ENCODE measurements at regions of chr2 and their contacts with region 1.

Region 1: GRCh38 chr2:85132834-85133637 is at the start of gene TCF7L1:
- DNase-seq: peak in 1 of 2 donors; percentile 93
- H3K4me3 ChIP-seq: peak within 1 kb of the TSS; percentile 87 to 95
- H3K27ac ChIP-seq: peak within 1 kb of the TSS; percentile 91
- H3K4me1 ChIP-seq: peaks cover 51% of the 10 kb centered on the region
- H3K27me3 ChIP-seq: no peaks in the 10 kb centered on the region
- CTCF ChIP-seq: peak; percentile 72 to 80 (median 75)
- POLR2A ChIP-seq: peak in 1 of 2 donors; percentile 76
- total RNA-seq, gene TCF7L1: 8.3 TPM

Region 2: DNA sequence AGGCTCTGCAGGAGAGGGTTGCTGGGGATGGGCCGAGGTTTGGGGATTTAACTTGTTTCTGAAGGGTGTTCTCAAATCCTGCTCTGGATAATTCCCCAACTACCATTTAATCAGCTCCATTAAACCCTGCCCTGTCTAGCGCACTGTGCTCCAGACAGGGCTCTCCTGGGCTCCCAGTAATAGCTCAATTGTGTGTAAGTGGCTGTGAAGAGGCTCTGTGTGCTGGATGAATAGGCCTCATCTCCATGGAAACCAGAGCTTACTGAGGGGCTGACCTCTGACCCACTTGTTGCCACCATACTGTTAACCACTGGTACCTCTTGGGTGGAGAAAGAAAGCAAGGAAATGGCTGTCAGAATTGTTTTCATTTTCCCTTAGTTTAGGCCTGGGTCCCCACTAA is 101.8 kb after region 1 on chr2:
- intact Hi-C with region 1: no loop called
- DNase-seq: no peak
- H3K4me3 ChIP-seq: no peak overlapping the region
- H3K27ac ChIP-seq: no peak overlapping the region
- H3K4me1 ChIP-seq: peaks cover 24% of the 10 kb centered on the region
- H3K27me3 ChIP-seq: no peaks in the 10 kb centered on the region
- CTCF ChIP-seq: no peak
- POLR2A ChIP-seq: no peak

Region 3: DNA sequence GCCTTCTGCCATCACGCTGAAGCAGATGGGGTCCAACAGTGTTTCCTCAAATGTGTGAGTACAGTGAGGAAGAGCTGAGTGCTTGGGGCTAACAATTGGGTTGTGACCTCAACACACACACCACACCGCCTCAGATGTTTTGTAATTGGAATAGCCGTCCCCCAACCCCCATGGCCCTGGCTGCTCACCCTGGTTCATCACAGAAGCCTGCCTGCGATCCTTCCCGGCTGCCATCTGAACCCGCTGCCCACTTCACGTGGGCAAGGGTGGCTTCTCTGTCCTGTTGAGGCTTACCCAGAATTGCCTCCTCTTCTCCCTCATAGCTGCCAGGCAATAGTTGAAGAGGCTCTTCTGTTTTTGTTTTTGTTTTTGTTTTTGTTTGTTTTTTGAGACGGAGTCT is 150.6 kb after region 1 on chr2:
- intact Hi-C with region 1: loop called (anchors 2 kb)
- DNase-seq: no peak
- H3K4me3 ChIP-seq: no peak overlapping the region
- H3K27ac ChIP-seq: no peak overlapping the region
- H3K4me1 ChIP-seq: peaks cover 13% of the 10 kb centered on the region
- H3K27me3 ChIP-seq: no peaks in the 10 kb centered on the region
- CTCF ChIP-seq: no peak
- POLR2A ChIP-seq: no peak

Measured in vagina (tissue), 2 donors.